Head of caudate nucleus (tissue), 42 donors: ENCODE measurements at regions of chr2 and their contacts with region 1.

Region 1: DNA sequence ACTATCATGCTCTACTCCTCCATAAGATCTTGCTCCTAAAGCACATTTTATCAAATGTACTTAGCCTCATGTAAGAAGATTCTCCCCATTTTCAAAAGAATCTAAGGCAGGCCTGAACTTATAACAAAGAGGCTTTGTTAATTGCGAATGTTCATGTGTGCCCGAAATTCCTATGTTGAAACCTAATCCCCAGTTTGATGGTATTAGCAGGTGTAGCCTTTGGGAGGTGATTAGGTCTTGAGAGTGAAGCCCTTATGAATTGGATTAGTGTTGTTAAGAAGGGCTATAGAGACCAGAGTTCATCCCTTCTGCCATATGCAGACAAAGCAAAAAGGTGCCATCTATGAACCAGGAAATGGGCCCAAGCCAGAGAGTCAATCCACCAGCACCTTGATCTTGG is 234.5 kb downstream of the PAX3 start:
- DNase-seq: no peak

Region 2: GRCh38 chr2:221649051-221649775 is 415.1 kb before region 1 on chr2:
- intact Hi-C with region 1: no loop called
- DNase-seq: peak in 34 of 42 donors; percentile 5 to 65 (median 24)

Region 3: GRCh38 chr2:222613715-222614331 is 549.5 kb after region 1 on chr2:
- intact Hi-C with region 1: loop called (anchors 10 kb)
- DNase-seq: peak in 9 of 42 donors; percentile 16 to 50 (median 24)